HCT116 (cell line): ENCODE measurements at regions of chr11 and their contacts with region 1.

Region 1: DNA sequence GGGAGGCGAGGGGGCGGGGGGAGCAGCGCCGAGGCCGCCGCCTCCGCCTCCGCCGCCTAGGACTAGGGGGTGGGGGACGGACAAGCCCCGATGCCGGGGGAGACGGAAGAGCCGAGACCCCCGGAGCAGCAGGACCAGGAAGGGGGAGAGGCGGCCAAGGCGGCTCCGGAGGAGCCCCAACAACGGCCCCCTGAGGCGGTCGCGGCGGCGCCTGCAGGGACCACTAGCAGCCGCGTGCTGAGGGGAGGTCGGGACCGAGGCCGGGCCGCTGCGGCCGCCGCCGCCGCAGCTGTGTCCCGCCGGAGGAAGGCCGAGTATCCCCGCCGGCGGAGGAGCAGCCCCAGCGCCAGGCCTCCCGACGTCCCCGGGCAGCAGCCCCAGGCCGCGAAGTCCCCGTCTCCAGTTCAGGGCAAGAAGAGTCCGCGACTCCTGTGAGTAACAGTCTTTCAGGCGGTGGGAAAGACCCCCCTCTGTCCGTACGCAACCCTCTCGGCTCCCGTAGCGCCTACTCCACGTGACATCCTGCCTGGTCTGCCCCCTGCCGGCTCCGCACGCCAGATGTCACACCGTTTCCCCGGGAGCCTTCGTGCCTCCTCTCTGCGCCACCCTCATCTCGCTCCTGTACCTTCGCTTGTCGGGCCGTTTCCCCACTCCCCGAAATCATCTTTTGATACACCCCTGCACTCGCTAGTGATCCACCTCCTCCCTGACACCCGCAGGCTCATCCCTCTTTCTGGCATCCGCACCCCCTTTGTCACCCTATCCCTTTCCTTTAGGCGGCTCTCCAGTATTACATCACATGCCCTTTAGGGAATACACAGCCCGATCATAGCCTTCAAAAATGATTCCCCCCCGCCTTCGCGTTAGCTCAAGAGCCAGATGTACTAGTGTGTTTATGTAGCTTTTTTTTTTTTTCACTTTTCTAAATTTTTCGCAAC is 598 bp downstream of the ZFP91 start:
- DNase-seq: peak; percentile 78
- ATAC-seq: peak; percentile 57
- H3K4me3 ChIP-seq: peak overlapping the region; percentile 78 to 88
- H3K27ac ChIP-seq: peak overlapping the region; percentile 97
- H3K4me1 ChIP-seq: peaks cover 15 to 23% of the 10 kb centered on the region in 2 experiments
- H3K27me3 ChIP-seq: no peaks in the 10 kb centered on the region
- CTCF ChIP-seq: peak; percentile 28 to 77 (median 66); a peak in 5 of 6 replicates
- POLR2A ChIP-seq: peak; percentile 37
- RAD21 ChIP-seq: no peak

Region 2: DNA sequence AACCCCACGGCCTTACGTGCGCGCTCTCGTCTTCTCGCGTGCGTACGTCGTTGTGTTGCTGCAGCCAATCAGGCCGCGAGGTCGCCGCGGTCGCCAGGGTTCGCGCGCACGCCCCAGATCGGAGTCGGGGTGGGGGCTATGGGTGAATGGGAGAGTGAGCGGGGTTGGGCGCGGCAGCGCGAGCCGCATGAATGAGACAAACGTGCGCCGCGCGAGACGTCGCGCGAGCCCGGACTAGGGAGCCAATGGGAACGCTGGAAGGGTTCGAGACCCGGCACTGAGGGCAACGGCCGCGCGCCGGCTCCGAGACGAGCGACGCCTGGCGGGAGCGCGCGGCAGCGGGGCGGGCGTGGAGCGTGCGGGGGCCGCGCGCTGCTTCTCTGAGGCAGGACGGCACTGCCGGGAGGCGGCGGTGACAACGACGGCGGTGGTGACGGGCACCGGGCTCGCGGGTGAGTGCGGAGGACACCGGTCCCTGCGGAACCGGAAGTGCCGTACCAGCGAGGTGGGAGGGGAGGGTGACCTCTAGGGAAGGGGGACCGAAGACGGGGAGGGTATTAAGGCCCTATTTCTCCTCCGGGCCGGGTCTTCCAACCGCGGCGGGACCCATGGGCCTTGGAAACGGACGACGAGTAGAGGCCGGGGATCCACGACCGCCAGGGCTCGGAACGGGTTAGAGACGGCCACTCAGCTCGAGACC is 911.6 kb before region 1 on chr11 and contains the start of gene ZDHHC5:
- CTCF ChIA-PET with region 1: no interaction called
- POLR2A ChIA-PET with region 1: no interaction called
- RAD21 ChIA-PET with region 1: no interaction called
- intact Hi-C with region 1: loop called (anchors 5 kb)
- DNase-seq: peak; percentile 99
- ATAC-seq: peak; percentile 90
- H3K4me3 ChIP-seq: peak within 1 kb of the TSS; percentile 85 to 97
- H3K27ac ChIP-seq: peak within 1 kb of the TSS; percentile 93
- H3K4me1 ChIP-seq: peaks cover 9 to 19% of the 10 kb centered on the region in 2 experiments
- H3K27me3 ChIP-seq: no peaks in the 10 kb centered on the region
- CTCF ChIP-seq: peak in 2 of 3 experiments; percentile 39 to 41; a peak in 3 of 6 replicates
- POLR2A ChIP-seq: peak; percentile 58
- RAD21 ChIP-seq: no peak
- total RNA-seq, gene ZDHHC5: 64.1 TPM

Region 3: GRCh38 chr11:58046231-58046630 is 533.2 kb before region 1 on chr11:
- CTCF ChIA-PET with region 1: no interaction called
- POLR2A ChIA-PET with region 1: no interaction called
- RAD21 ChIA-PET with region 1: no interaction called
- intact Hi-C with region 1: no loop called
- DNase-seq: no peak
- ATAC-seq: no peak
- H3K4me3 ChIP-seq: no peak overlapping the region
- H3K27ac ChIP-seq: no peak overlapping the region
- H3K4me1 ChIP-seq: no peaks in the 10 kb centered on the region
- H3K27me3 ChIP-seq: 0 out of 2 replicates have a peak, but pooled peaks cover 12% of the 10 kb centered on the region
- CTCF ChIP-seq: no peak
- POLR2A ChIP-seq: no peak
- RAD21 ChIP-seq: no peak

Region 4: GRCh38 chr11:58567889-58568512 is 11.5 kb before region 1 on chr11:
- CTCF ChIA-PET with region 1: interaction called, 21 read pairs
- POLR2A ChIA-PET with region 1: no interaction called
- RAD21 ChIA-PET with region 1: no interaction called
- intact Hi-C with region 1: no loop called
- DNase-seq: peak; percentile 51
- ATAC-seq: peak; percentile 95
- H3K4me3 ChIP-seq: no peak overlapping the region
- H3K27ac ChIP-seq: no peak overlapping the region
- H3K4me1 ChIP-seq: peaks cover under 1 to 2% of the 10 kb centered on the region in 2 experiments; a peak in 3 of 4 replicates
- H3K27me3 ChIP-seq: no peaks in the 10 kb centered on the region
- CTCF ChIP-seq: peak; percentile 75 to 88 (median 80)
- POLR2A ChIP-seq: no peak
- RAD21 ChIP-seq: peak; percentile 44

Region 5: DNA sequence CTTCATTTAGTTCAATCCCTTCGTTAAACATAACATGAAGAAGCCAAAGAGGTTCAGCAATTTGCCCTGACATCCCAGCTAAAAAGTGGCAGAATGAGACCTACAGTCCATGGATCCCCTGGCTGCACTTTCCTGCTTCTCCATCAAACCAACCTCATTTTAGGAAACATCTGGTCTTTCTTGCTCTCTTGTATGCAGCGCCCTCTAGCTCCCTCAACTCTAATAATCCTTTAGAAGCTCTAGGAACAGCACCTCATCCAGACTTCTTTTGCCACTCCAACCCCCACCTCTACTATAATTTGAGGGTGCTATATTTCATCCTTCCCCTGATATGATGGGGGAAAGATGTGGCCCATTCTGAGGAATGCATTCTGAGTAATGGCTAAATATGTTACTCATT is 50.4 kb after region 1 on chr11:
- CTCF ChIA-PET with region 1: interaction called, 15 read pairs
- POLR2A ChIA-PET with region 1: no interaction called
- RAD21 ChIA-PET with region 1: interaction called in 1 of 2 experiments, 3 read pairs
- intact Hi-C with region 1: no loop called
- DNase-seq: peak; percentile 22
- ATAC-seq: peak; percentile 78
- H3K4me3 ChIP-seq: no peak overlapping the region
- H3K27ac ChIP-seq: no peak overlapping the region
- H3K4me1 ChIP-seq: peaks cover 8 to 25% of the 10 kb centered on the region in 2 experiments
- H3K27me3 ChIP-seq: no peaks in the 10 kb centered on the region
- CTCF ChIP-seq: peak; percentile 52 to 75 (median 67); a peak in 5 of 6 replicates
- POLR2A ChIP-seq: no peak
- RAD21 ChIP-seq: peak; percentile 58

Region 6: GRCh38 chr11:58640386-58641023 is 61.0 kb after region 1 on chr11:
- CTCF ChIA-PET with region 1: no interaction called
- POLR2A ChIA-PET with region 1: no interaction called
- RAD21 ChIA-PET with region 1: no interaction called
- intact Hi-C with region 1: no loop called
- DNase-seq: no peak
- ATAC-seq: no peak
- H3K4me3 ChIP-seq: no peak overlapping the region
- H3K27ac ChIP-seq: no peak overlapping the region
- H3K4me1 ChIP-seq: no peaks in the 10 kb centered on the region
- H3K27me3 ChIP-seq: no peaks in the 10 kb centered on the region
- CTCF ChIP-seq: no peak
- POLR2A ChIP-seq: no peak
- RAD21 ChIP-seq: no peak

Region 7: GRCh38 chr11:58788355-58789023 is 209.0 kb after region 1 on chr11:
- CTCF ChIA-PET with region 1: interaction called, 3 read pairs
- POLR2A ChIA-PET with region 1: no interaction called
- RAD21 ChIA-PET with region 1: no interaction called
- intact Hi-C with region 1: loop called (anchors 2 kb)
- DNase-seq: peak; percentile 34
- ATAC-seq: peak; percentile 98
- H3K4me3 ChIP-seq: no peak overlapping the region
- H3K27ac ChIP-seq: no peak overlapping the region
- H3K4me1 ChIP-seq: peaks cover 0 to 10% of the 10 kb centered on the region in 2 experiments; a peak in 1 of 4 replicates
- H3K27me3 ChIP-seq: no peaks in the 10 kb centered on the region
- CTCF ChIP-seq: peak; percentile 75 to 95 (median 88); a peak in 5 of 6 replicates
- POLR2A ChIP-seq: no peak
- RAD21 ChIP-seq: peak; percentile 91

Region 8: DNA sequence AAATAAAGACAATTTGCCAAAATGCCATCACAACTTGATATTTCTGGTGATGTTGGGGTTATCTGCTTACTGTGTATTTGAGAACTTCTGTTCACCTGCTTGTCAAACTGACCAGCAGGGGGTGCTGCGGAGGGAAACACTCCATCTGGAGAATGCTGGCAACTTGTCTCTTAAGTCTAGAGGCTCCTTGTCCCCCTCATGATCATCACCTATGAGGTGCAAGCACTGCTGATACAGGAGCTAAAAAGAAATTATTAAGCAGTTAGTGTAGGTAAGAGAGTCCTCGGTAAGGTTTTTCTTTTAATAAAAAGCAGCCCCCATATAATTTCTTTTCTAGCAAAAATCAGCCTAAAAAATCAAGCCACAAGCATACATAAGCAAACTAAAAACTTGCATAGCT is 473.9 kb after region 1 on chr11:
- CTCF ChIA-PET with region 1: interaction called, 3 read pairs
- POLR2A ChIA-PET with region 1: no interaction called
- RAD21 ChIA-PET with region 1: no interaction called
- intact Hi-C with region 1: loop called (anchors 5 kb)
- DNase-seq: peak; percentile 40
- ATAC-seq: peak; percentile 74
- H3K4me3 ChIP-seq: no peak overlapping the region
- H3K27ac ChIP-seq: no peak overlapping the region
- H3K4me1 ChIP-seq: peaks cover 0 to 5% of the 10 kb centered on the region in 2 experiments; a peak in 2 of 4 replicates
- H3K27me3 ChIP-seq: 0 out of 2 replicates have a peak, but pooled peaks cover 4% of the 10 kb centered on the region
- CTCF ChIP-seq: peak; percentile 24 to 76 (median 75); a peak in 5 of 6 replicates
- POLR2A ChIP-seq: no peak
- RAD21 ChIP-seq: peak; percentile 22; the same call in 1 of the 2 replicates